ENCODE measurements at regions of chr7 and their contacts with region 1.

Region 1: GRCh38 chr7:158976849-158977593 is 120.7 kb downstream of the DYNC2I1 start:
- DNase-seq: peak; percentile 82
- ATAC-seq: peak; percentile 79 to 84

Region 2: DNA sequence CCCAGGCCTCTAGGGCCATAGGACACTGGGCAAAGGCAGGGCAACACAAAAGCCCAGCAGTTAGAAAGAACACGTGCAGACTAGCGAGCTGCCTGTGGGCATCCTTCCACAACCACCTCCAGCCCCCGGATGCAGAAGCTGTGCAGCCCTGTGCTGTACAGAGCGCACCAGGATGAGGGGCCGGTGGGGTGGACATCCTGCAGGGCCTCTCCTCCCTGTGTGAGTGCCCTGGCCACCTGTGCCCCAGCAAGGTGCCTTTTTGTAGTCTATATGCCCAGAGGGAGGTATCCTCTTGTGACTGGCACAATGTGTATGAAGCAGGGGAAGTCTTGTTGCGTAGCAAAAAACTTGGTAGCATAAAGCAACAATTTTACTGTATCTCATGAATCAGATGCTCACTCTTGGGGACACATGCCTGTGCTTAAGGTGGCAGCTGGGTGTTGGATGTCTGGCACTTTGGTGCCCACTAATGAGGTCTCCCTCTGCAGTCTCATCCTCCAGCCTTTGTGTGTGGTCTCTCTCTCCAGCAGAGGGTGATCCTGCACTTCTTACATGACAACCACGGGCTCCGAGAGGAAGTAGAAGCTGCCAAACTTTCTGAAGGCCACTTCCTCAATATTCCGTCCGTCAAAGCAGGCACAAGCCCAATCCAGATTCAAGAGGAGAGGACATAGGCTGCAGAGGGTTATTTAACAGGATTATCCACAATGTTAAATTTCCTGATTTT is 281.1 kb before region 1 on chr7:
- intact Hi-C with region 1: loop called (anchors 2 to 5 kb)
- DNase-seq: peak; percentile 72
- ATAC-seq: peak; percentile 98

Region 3: GRCh38 chr7:159272739-159273138 is 295.7 kb after region 1 on chr7:
- intact Hi-C with region 1: no loop called
- DNase-seq: no peak
- ATAC-seq: no peak

Measured in left cardiac atrium (tissue), 4 donors.